ENCODE measurements at regions of chr11 and their contacts with region 1.

Region 1: DNA sequence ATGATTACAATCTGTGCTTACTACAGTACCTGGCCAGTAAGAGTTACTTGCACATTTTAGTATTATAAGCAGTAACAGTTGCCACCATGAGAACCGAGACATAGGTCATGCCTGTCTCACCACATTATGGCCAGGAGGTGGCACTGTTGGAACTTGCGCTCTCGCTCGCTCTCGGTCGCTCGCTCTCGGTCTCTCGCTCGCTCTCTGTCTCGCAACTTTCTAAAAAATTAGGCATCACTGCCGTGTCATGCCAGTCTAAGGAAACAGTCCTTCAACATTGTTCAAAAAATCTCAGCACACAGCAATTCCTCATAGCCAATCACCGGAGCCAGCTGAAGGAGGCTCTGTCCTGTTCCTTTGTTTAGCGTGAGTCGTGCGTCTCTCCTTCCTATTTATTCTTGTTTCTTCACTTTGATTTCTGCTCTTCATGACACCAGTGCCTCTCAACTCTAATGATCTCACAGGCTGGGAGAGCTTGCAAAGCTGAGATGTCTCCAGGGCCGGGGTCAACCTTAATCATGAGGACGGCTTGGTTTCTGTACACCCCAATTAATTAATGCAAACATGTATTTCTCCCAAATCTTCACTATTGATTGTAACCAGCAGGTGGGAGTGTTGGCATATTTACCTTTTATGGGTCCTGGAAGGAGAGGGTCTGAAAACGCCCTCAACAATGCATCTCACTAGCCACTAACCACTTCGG is 6.3 kb upstream of the ADAMTS8 start:
- DNase-seq: peak; percentile 69 to 84
- H3K4me3 ChIP-seq: peak overlapping the region; percentile 69
- H3K27ac ChIP-seq: peak overlapping the region; percentile 34; the same call in 1 of the 2 replicates
- H3K4me1 ChIP-seq: 0 out of 2 replicates have a peak, but pooled peaks cover 4% of the 10 kb centered on the region
- H3K27me3 ChIP-seq: peaks cover 10% of the 10 kb centered on the region; the same call in 1 of the 2 replicates
- CTCF ChIP-seq: peak; percentile 86

Region 2: GRCh38 chr11:129922674-129923073 is 512.0 kb before region 1 on chr11:
- CTCF ChIA-PET with region 1: no interaction called
- POLR2A ChIA-PET with region 1: no interaction called
- intact Hi-C with region 1: loop called (anchors 5 kb)
- DNase-seq: no peak
- H3K4me3 ChIP-seq: no peak overlapping the region
- H3K27ac ChIP-seq: no peak overlapping the region
- H3K4me1 ChIP-seq: no peaks in the 10 kb centered on the region
- H3K27me3 ChIP-seq: no peaks in the 10 kb centered on the region
- CTCF ChIP-seq: no peak

Region 3: GRCh38 chr11:130448416-130449309 is 14.0 kb after region 1 on chr11 and contains the start of gene ADAMTS15:
- CTCF ChIA-PET with region 1: no interaction called
- POLR2A ChIA-PET with region 1: interaction called, 15 read pairs
- intact Hi-C with region 1: no loop called
- DNase-seq: peak; percentile 79 to 82
- H3K4me3 ChIP-seq: peak within 1 kb of the TSS; percentile 74
- H3K27ac ChIP-seq: peak within 1 kb of the TSS; percentile 28; the same call in 1 of the 2 replicates
- H3K4me1 ChIP-seq: peaks cover 34% of the 10 kb centered on the region
- H3K27me3 ChIP-seq: no peaks in the 10 kb centered on the region
- CTCF ChIP-seq: no peak
- total RNA-seq, gene ADAMTS15: 1.8 and 2.2 TPM in 2 replicates

Region 4: GRCh38 chr11:130580372-130580771 is 145.7 kb after region 1 on chr11:
- CTCF ChIA-PET with region 1: no interaction called
- POLR2A ChIA-PET with region 1: no interaction called
- intact Hi-C with region 1: loop called (anchors 10 kb)
- DNase-seq: peak; percentile 59 to 70
- H3K4me3 ChIP-seq: no peak overlapping the region
- H3K27ac ChIP-seq: peak overlapping the region; percentile 82
- H3K4me1 ChIP-seq: peaks cover 18% of the 10 kb centered on the region
- H3K27me3 ChIP-seq: no peaks in the 10 kb centered on the region
- CTCF ChIP-seq: no peak

Region 5: GRCh38 chr11:130772266-130773227 is 337.9 kb after region 1 on chr11:
- CTCF ChIA-PET with region 1: no interaction called
- POLR2A ChIA-PET with region 1: no interaction called
- intact Hi-C with region 1: loop called (anchors 2 kb)
- DNase-seq: peak; percentile 59 to 71
- H3K4me3 ChIP-seq: no peak overlapping the region
- H3K27ac ChIP-seq: peak overlapping the region; percentile 3; the same call in 1 of the 2 replicates
- H3K4me1 ChIP-seq: peaks cover 31% of the 10 kb centered on the region
- H3K27me3 ChIP-seq: no peaks in the 10 kb centered on the region
- CTCF ChIP-seq: no peak

Region 6: DNA sequence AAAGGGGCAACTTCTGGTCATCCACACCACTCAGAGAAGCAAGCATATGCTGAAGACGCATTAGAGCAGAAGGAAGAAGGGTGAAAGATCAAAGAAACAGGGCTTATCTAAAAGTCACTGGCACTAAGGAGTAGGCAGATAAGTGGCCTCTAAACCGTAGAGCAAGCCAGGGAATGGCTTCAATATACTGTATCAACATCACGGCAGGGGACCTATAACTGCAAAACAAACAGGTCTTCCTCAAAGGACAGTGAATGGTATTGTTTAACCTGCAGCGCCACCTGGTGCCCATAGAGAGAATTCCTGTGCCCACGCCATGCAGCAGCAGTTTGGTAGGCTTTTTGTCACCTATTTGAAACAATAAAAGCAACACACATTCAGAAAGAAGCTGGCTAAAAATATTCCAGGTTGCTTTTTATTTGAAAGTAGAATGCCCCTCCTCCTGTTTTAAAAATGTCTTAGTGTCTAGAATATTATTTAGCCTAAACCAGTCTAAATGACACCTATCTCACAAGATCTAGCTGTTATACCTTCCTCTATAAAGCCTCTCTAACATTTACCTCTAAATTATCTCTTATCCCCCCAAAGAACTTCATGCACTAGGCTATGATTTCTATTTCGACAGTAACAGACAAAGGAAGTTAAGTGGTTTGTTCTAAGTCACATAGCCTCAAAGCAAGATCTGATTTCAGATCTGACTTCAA is 459.8 kb after region 1 on chr11:
- CTCF ChIA-PET with region 1: interaction called, 6 read pairs
- POLR2A ChIA-PET with region 1: interaction called, 6 read pairs
- intact Hi-C with region 1: loop called (anchors 1 kb)
- DNase-seq: peak; percentile 58 to 59
- H3K4me3 ChIP-seq: no peak overlapping the region
- H3K27ac ChIP-seq: no peak overlapping the region
- H3K4me1 ChIP-seq: no peaks in the 10 kb centered on the region
- H3K27me3 ChIP-seq: no peaks in the 10 kb centered on the region
- CTCF ChIP-seq: peak; percentile 92